ENCODE measurements at regions of chrX and their contacts with region 1.

Region 1: DNA sequence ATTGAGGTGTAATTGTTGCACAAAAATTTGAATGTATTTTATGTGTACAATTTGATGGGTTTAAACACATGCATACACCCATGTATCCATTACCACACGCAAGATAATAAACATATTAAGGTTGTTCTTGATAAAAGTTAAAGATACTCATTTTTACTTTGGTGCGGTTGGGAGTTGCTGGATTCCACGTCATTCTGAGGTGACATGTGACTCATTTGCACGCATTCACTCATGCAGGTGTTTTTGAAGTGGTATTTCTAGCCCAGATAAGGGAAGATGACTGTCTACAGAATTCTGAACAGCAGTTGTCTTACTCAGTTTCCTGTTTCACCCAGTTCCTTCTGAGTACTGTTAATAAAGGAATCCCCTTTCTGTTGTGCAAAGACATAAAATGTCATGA is 142.0 kb downstream of the RTL3 start:
- DNase-seq: peak; percentile 64
- H3K4me3 Mint-ChIP-seq: no peak overlapping the region
- H3K27ac Mint-ChIP-seq: peak overlapping the region; percentile 86
- H3K4me1 Mint-ChIP-seq: peaks cover 47% of the 10 kb centered on the region
- H3K27me3 Mint-ChIP-seq: no peaks in the 10 kb centered on the region

Region 2: DNA sequence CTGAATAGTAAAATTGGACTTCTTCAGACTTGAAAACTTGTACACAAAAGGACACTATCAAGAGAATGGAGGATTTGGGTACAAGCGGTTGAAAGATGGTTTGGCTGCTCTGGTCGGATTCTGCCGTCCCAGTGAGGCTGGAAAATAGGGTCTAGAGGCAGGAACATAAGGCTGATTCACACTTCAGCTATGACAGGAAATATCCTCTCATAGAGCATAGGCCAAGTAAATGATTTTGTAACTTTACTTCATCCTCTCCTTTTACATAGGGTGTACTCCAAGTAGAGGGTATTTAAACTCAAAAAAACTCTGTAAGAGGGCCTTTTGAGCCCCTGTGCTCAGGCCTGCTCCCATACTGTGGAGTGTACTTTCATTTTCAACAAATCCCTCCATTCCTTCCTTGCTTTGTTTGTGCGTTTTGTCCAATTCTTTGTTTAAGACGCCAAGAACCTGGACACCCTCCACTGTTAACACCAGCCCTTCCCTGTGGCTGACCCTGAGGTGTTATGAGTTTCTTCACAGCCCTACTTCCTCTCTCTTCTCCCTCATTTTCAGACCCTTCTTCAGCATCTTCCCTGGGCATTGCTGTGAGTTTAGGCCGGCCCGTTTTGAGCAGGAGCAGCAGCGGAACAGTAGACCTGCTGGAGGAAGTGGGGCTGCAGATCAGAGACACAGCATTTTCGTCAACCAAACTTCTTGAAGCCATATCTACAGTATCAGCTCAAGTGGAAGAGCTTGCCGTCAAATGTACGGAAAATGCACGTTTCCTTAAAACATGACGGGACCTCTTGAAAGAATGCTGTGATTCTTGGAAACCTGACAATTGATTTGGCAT is 554.8 kb before region 1 on chrX:
- intact Hi-C with region 1: loop called (anchors 10 kb)
- DNase-seq: no peak
- H3K4me3 Mint-ChIP-seq: peak overlapping the region; percentile 70
- H3K27ac Mint-ChIP-seq: peak overlapping the region; percentile 93
- H3K4me1 Mint-ChIP-seq: peaks cover 23% of the 10 kb centered on the region
- H3K27me3 Mint-ChIP-seq: no peaks in the 10 kb centered on the region

Region 3: GRCh38 chrX:78139160-78140123 is 377.7 kb before region 1 on chrX and contains the start of gene TAF9B:
- intact Hi-C with region 1: loop called (anchors 5 kb)
- DNase-seq: peak; percentile 80
- H3K4me3 Mint-ChIP-seq: peak within 1 kb of the TSS; percentile 88
- H3K27ac Mint-ChIP-seq: peak within 1 kb of the TSS; percentile 93
- H3K4me1 Mint-ChIP-seq: peaks cover 8% of the 10 kb centered on the region
- H3K27me3 Mint-ChIP-seq: no peaks in the 10 kb centered on the region
- total RNA-seq, gene TAF9B: 16.8 and 17.0 TPM in 2 replicates

Region 4: DNA sequence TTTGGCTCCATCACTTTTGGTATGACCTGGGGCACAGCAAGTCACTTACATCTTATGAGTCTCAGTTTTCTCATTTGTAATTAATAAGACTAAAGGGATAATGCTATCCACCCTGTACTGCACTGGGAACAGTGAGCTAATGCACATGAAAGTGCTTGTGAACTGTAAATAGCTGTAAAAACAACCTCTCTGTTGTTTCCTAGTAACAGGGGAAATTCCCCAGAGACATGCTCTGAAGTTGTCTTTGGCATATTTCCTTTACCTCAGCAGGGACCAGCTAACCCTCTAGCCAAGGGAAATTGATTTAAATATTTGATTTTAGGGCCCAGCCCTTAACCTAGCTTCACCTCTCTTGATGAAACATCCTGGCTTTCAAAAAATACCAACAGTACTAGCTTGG is 183.6 kb before region 1 on chrX:
- intact Hi-C with region 1: loop called (anchors 1 kb)
- DNase-seq: no peak
- H3K4me3 Mint-ChIP-seq: no peak overlapping the region
- H3K27ac Mint-ChIP-seq: peak overlapping the region; percentile 75
- H3K4me1 Mint-ChIP-seq: peaks cover 52% of the 10 kb centered on the region
- H3K27me3 Mint-ChIP-seq: no peaks in the 10 kb centered on the region

Region 5: DNA sequence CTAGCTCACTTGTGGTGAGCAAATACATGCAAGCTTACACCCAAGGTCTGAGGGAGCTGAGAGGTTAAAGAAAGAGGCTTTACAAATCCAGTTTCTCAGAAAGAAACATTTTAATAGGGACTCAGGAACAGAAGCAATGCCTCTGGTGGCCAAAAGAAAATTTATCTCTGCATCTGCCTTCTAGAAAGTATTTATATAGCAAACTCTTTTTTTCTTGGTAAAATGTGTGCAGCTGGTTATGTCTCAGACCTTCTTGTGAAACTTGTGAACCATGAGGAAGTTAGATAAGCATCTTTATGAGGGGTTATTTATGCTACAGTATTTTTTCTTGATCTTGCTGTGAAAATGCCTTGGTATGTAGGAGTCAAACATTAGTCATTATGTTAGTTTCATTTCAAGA is 141.2 kb before region 1 on chrX:
- intact Hi-C with region 1: loop called (anchors 1 kb)
- DNase-seq: no peak
- H3K4me3 Mint-ChIP-seq: no peak overlapping the region
- H3K27ac Mint-ChIP-seq: peak overlapping the region; percentile 31
- H3K4me1 Mint-ChIP-seq: peaks cover 31% of the 10 kb centered on the region
- H3K27me3 Mint-ChIP-seq: no peaks in the 10 kb centered on the region

Region 6: GRCh38 chrX:78476701-78477100 is 40.4 kb before region 1 on chrX:
- intact Hi-C with region 1: no loop called
- DNase-seq: no peak
- H3K4me3 Mint-ChIP-seq: no peak overlapping the region
- H3K27ac Mint-ChIP-seq: no peak overlapping the region
- H3K4me1 Mint-ChIP-seq: no peaks in the 10 kb centered on the region
- H3K27me3 Mint-ChIP-seq: no peaks in the 10 kb centered on the region

Region 7: DNA sequence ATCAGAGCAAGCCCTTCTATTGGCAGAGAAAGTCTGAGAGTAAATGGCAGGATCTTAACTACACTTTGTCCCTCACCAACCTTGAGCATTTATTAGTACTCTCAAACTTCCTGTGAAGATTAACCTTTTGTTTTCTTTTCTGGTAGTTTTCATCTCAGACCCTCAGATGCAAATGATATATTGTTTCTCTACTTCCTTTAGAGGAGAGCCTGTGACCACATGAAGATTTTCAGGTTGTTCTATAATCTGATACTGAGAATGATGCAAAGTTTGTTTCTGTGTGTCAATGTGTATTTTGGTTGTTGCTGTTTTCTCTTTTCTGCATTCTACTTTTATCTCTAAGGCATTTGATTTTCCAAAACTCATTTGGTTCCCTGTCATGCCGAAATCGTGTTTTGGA is 23.9 kb before region 1 on chrX:
- intact Hi-C with region 1: no loop called
- DNase-seq: no peak
- H3K4me3 Mint-ChIP-seq: no peak overlapping the region
- H3K27ac Mint-ChIP-seq: no peak overlapping the region
- H3K4me1 Mint-ChIP-seq: peaks cover 19% of the 10 kb centered on the region
- H3K27me3 Mint-ChIP-seq: no peaks in the 10 kb centered on the region

Region 8: DNA sequence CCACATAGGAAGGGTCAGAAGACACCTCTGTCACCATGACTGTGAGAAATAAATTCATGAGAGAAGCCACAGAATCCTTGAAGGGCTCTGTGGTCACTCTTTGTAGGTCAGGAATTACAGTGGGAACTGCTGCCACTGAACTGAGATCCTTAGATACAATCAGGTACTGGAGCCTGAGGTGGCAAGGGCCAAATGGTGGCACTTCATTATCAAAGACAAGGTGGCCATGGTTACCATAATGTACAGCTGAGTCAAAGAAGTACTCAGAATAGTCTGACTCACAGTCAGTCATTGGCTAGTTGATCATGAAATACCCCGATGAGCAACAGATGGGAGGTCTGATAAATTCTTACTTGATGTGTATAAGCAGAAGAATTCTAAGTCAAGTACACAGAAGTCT is 10.1 kb after region 1 on chrX:
- intact Hi-C with region 1: loop called (anchors 1 kb)
- DNase-seq: no peak
- H3K4me3 Mint-ChIP-seq: no peak overlapping the region
- H3K27ac Mint-ChIP-seq: peak overlapping the region; percentile 85
- H3K4me1 Mint-ChIP-seq: peaks cover 39% of the 10 kb centered on the region
- H3K27me3 Mint-ChIP-seq: no peaks in the 10 kb centered on the region

Region 9: GRCh38 chrX:78555401-78555980 is 38.4 kb after region 1 on chrX:
- intact Hi-C with region 1: no loop called
- DNase-seq: no peak
- H3K4me3 Mint-ChIP-seq: no peak overlapping the region
- H3K27ac Mint-ChIP-seq: peak overlapping the region; percentile 38
- H3K4me1 Mint-ChIP-seq: peaks cover 5% of the 10 kb centered on the region
- H3K27me3 Mint-ChIP-seq: no peaks in the 10 kb centered on the region

Region 10: GRCh38 chrX:79161655-79162054 is 644.5 kb after region 1 on chrX:
- intact Hi-C with region 1: loop called (anchors 5 kb)
- DNase-seq: peak; percentile 43
- H3K4me3 Mint-ChIP-seq: peak overlapping the region; percentile 89
- H3K27ac Mint-ChIP-seq: peak overlapping the region; percentile 99
- H3K4me1 Mint-ChIP-seq: peaks cover 54% of the 10 kb centered on the region
- H3K27me3 Mint-ChIP-seq: no peaks in the 10 kb centered on the region

Measured in activated T-helper 2 cell treated with anti-CD3 and anti-CD28 coated beads, Interferon-gamma antibody, Interleukin-2, Interleukin-4, amounts not matched to agents 10 μg/mL and 5 μg/mL and 100 μg/mL, durations not matched to agents 14 hours and 24 hours and 36 hours (primary cell).